Activated CD4-positive, alpha-beta memory T cell treated with anti-CD3 and anti-CD28 coated beads for 36 hours (primary cell): ENCODE measurements at regions of chr5 and their contacts with region 1.

Region 1: DNA sequence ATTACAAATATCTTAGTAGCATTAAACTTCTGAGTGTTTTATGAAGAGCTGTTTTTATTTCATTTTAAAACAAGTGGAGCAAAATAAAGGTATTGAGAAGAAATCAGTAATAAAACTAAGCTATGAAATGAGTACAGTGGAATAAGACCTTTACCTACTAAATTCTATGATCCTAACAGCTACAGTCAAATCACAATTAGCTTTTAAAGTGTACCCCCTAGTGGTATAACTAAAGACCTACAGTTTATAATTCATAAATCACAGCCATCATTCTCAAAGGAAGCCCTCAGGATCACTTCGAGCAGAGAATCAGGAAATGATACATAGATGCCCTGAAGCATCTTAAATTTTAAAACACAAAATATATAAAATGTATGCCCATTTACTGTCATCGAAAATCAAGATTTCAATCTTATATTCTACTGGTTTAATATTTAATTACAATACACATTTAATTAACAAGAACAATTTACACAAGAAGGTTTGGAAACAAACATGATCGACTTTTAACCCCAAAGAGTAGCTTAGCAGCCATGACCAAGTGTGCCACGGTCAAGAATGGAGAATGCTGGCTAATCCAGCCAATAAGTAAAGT is 12.3 kb downstream of the CCNH start:
- DNase-seq: no peak
- H3K4me3 Mint-ChIP-seq: no peak overlapping the region
- H3K27ac Mint-ChIP-seq: no peak overlapping the region
- H3K4me1 Mint-ChIP-seq: peaks cover 31% of the 10 kb centered on the region
- H3K27me3 Mint-ChIP-seq: no peaks in the 10 kb centered on the region

Region 2: GRCh38 chr5:86880785-86881492 is 519.5 kb before region 1 on chr5:
- CTCF ChIA-PET with region 1: interaction called, 6 read pairs
- POLR2A ChIA-PET with region 1: no interaction called
- intact Hi-C with region 1: loop called (anchors 1 kb)
- DNase-seq: peak; percentile 57
- H3K4me3 Mint-ChIP-seq: no peak overlapping the region
- H3K27ac Mint-ChIP-seq: no peak overlapping the region
- H3K4me1 Mint-ChIP-seq: no peaks in the 10 kb centered on the region
- H3K27me3 Mint-ChIP-seq: peaks cover 4% of the 10 kb centered on the region

Region 3: DNA sequence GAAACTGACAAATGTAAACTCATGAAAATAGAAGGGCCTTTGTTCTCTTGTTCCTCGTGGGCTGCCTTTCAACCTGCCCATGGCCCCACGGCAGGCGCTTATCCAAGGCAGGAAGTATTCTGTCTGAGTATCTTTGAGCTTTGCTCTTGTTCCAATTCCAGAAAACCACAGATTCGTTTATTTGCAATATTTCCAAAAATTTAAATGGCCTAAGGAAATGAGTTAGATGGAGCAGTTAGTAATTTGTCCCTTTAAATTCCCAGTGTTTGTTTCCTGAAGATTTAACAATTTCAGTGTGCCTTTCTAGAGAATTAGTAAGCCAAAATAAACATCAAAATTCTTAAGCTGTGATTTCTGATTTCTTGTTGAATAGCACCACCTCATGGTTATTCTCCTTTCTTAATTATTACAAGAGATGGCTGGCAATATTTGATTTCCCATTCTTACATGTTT is 432.1 kb before region 1 on chr5:
- CTCF ChIA-PET with region 1: interaction called, 7 read pairs
- POLR2A ChIA-PET with region 1: no interaction called
- intact Hi-C with region 1: loop called (anchors 1 kb)
- DNase-seq: no peak
- H3K4me3 Mint-ChIP-seq: no peak overlapping the region
- H3K27ac Mint-ChIP-seq: no peak overlapping the region
- H3K4me1 Mint-ChIP-seq: peaks cover 8% of the 10 kb centered on the region
- H3K27me3 Mint-ChIP-seq: peaks cover 5% of the 10 kb centered on the region

Region 4: DNA sequence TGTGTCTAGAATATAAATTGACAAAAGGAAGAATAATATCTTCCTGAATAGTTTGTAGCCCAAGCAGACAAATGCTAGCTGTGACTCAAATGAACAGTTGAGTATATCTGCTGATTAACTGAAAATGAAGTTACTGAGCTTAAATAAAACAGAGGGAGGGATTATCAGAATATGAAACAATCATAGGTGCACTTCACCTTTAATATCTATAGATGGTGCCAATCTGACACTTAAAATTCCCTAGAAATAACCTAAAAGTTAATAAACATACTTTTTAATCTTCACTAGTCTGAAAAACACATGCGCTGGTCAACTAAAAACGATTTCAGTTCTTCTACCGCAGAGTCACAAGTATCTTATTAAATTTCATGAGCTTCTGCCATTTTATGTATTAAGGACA is 413.6 kb before region 1 on chr5:
- CTCF ChIA-PET with region 1: interaction called, 10 read pairs
- POLR2A ChIA-PET with region 1: no interaction called
- intact Hi-C with region 1: no loop called
- DNase-seq: no peak
- H3K4me3 Mint-ChIP-seq: no peak overlapping the region
- H3K27ac Mint-ChIP-seq: no peak overlapping the region
- H3K4me1 Mint-ChIP-seq: no peaks in the 10 kb centered on the region
- H3K27me3 Mint-ChIP-seq: no peaks in the 10 kb centered on the region

Region 5: DNA sequence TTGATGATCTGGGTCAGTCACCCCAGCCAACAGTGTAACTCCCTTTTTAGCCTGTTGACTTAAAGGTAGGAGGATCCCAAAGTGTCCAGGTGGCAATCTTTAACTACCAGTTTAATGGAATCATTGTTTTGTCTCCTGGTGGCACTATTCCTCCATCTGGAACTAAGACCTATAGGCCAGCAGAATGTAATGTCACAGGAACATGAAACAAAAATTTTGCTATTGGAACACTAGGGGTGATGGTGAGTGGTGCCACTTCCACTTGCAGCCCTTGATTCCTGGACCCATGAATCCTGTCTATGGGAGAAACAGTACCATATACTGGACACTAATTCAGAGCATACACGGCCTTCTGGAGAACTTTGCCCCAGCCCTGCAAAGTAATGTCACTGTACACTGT is 352.2 kb before region 1 on chr5:
- CTCF ChIA-PET with region 1: interaction called, 3 read pairs
- POLR2A ChIA-PET with region 1: no interaction called
- intact Hi-C with region 1: loop called (anchors 1 kb)
- DNase-seq: no peak
- H3K4me3 Mint-ChIP-seq: no peak overlapping the region
- H3K27ac Mint-ChIP-seq: no peak overlapping the region
- H3K4me1 Mint-ChIP-seq: no peaks in the 10 kb centered on the region
- H3K27me3 Mint-ChIP-seq: no peaks in the 10 kb centered on the region

Region 6: GRCh38 chr5:87383216-87383615 is 17.2 kb before region 1 on chr5:
- CTCF ChIA-PET with region 1: interaction called, 17 read pairs
- POLR2A ChIA-PET with region 1: no interaction called
- intact Hi-C with region 1: no loop called
- DNase-seq: no peak
- H3K4me3 Mint-ChIP-seq: no peak overlapping the region
- H3K27ac Mint-ChIP-seq: no peak overlapping the region
- H3K4me1 Mint-ChIP-seq: peaks cover 4% of the 10 kb centered on the region
- H3K27me3 Mint-ChIP-seq: no peaks in the 10 kb centered on the region

Region 7: GRCh38 chr5:87438231-87438630 is 37.8 kb after region 1 on chr5:
- CTCF ChIA-PET with region 1: no interaction called
- POLR2A ChIA-PET with region 1: no interaction called
- intact Hi-C with region 1: no loop called
- DNase-seq: no peak
- H3K4me3 Mint-ChIP-seq: no peak overlapping the region
- H3K27ac Mint-ChIP-seq: no peak overlapping the region
- H3K4me1 Mint-ChIP-seq: peaks cover 1% of the 10 kb centered on the region
- H3K27me3 Mint-ChIP-seq: peaks cover 14% of the 10 kb centered on the region

Region 8: GRCh38 chr5:87807783-87808182 is 407.4 kb after region 1 on chr5:
- CTCF ChIA-PET with region 1: no interaction called
- POLR2A ChIA-PET with region 1: no interaction called
- intact Hi-C with region 1: no loop called
- DNase-seq: no peak
- H3K4me3 Mint-ChIP-seq: no peak overlapping the region
- H3K27ac Mint-ChIP-seq: no peak overlapping the region
- H3K4me1 Mint-ChIP-seq: no peaks in the 10 kb centered on the region
- H3K27me3 Mint-ChIP-seq: peaks cover 3% of the 10 kb centered on the region

Region 9: DNA sequence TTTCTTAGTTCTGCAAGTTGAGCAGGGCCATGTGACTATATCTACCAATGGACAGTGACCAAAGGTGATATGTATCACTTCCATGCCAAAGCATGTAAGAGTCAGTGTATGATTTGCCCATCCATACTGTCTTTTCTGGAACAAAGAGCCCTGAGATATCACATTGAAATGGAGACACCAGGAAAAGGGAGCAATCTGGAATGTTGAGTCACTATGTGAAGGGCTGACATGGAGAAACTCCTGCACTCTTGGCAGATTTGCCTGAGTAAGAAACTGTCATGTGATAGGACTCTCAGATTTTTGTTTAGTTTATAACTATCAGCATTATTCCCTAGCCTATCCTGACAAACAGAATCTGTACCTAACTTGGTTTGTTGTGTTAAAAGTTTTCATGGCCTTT is 898.0 kb after region 1 on chr5:
- CTCF ChIA-PET with region 1: no interaction called
- POLR2A ChIA-PET with region 1: no interaction called
- intact Hi-C with region 1: no loop called
- DNase-seq: no peak
- H3K4me3 Mint-ChIP-seq: no peak overlapping the region
- H3K27ac Mint-ChIP-seq: no peak overlapping the region
- H3K4me1 Mint-ChIP-seq: no peaks in the 10 kb centered on the region
- H3K27me3 Mint-ChIP-seq: peaks cover 3% of the 10 kb centered on the region